WTC11 (cell line): ENCODE measurements at regions of chr9 and their contacts with region 1.

Region 1: DNA sequence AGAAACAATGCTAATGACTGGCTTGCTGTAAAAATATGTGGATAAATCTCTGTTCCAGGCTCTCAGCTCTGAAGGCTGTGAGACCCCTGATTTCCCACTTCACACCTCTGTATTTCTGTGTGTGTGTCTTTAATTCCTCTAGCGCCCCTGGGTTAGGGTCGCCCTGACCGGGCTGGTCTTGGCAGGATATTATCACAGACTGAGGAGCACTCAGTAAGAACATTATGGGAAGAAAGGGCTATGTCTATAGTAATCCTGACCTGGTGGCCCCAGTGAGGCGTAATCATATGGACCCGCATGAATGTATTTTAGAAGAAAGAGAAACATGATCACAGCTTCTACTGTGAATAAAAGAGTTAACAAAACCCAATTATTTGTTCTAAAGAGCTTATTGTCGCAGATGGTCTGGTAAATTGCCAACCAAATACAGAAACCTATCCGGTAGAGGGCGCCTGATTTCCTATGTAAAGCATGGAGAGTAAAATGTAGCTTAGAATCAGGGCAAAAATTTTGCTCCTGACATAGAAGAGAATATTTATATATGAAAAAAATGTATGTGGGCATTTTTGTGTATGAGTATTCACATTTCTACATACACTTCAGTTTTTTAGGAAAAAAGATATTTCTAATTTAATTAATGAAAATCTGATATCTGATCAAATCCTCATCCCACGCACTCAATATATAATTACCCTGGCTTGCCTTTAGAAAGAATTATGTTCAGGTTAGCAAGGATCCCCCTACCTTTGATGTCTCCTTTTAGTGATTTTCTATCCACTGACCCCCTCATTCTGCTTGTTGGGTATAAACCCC is 5.8 kb upstream of the IFNA1 start:
- DNase-seq: peak; percentile 32
- ATAC-seq: peak; percentile 64
- H3K4me3 Mint-ChIP-seq: no peak overlapping the region
- H3K27ac Mint-ChIP-seq: no peak overlapping the region
- H3K4me1 Mint-ChIP-seq: peaks cover 18% of the 10 kb centered on the region
- H3K27me3 Mint-ChIP-seq: no peaks in the 10 kb centered on the region
- CTCF ChIP-seq: peak; percentile 34; the same call in 1 of the 2 replicates

Region 2: DNA sequence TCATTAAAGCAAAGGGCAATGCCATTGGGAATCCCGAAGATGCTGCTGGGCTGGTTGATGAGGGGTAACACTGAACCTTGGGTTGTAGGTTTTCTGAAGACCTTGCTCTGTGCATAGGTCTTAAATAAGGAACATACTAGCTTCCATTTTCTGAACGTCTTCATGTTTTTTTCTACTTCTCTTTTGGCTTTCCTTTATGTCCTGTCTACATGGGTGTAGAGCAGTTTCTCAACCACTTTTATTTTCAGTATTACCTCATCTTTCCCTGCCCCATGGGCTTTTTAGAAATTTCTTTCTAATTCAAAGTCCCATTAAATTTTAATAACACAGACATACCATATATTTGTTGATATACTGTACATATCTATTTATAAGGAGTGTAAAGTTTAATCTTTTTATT is 194.5 kb before region 1 on chr9 and contains the start of gene IFNA14:
- CTCF ChIA-PET with region 1: interaction called, 10 read pairs
- POLR2A ChIA-PET with region 1: no interaction called
- DNase-seq: no peak
- ATAC-seq: no peak
- H3K4me3 Mint-ChIP-seq: no peak within 1 kb of the TSS
- H3K27ac Mint-ChIP-seq: no peak within 1 kb of the TSS
- H3K4me1 Mint-ChIP-seq: no peaks in the 10 kb centered on the region
- H3K27me3 Mint-ChIP-seq: peaks cover 5% of the 10 kb centered on the region
- CTCF ChIP-seq: no peak
- total RNA-seq, gene IFNA14: not detected in 3 replicates

Region 3: GRCh38 chr9:21326526-21327139 is 107.8 kb before region 1 on chr9:
- CTCF ChIA-PET with region 1: interaction called, 22 read pairs
- POLR2A ChIA-PET with region 1: no interaction called
- DNase-seq: no peak
- ATAC-seq: peak; percentile 74
- H3K4me3 Mint-ChIP-seq: no peak overlapping the region
- H3K27ac Mint-ChIP-seq: no peak overlapping the region
- H3K4me1 Mint-ChIP-seq: 0 out of 2 replicates have a peak, but pooled peaks cover 2% of the 10 kb centered on the region
- H3K27me3 Mint-ChIP-seq: no peaks in the 10 kb centered on the region
- CTCF ChIP-seq: peak; percentile 14; the same call in 1 of the 2 replicates

Region 4: DNA sequence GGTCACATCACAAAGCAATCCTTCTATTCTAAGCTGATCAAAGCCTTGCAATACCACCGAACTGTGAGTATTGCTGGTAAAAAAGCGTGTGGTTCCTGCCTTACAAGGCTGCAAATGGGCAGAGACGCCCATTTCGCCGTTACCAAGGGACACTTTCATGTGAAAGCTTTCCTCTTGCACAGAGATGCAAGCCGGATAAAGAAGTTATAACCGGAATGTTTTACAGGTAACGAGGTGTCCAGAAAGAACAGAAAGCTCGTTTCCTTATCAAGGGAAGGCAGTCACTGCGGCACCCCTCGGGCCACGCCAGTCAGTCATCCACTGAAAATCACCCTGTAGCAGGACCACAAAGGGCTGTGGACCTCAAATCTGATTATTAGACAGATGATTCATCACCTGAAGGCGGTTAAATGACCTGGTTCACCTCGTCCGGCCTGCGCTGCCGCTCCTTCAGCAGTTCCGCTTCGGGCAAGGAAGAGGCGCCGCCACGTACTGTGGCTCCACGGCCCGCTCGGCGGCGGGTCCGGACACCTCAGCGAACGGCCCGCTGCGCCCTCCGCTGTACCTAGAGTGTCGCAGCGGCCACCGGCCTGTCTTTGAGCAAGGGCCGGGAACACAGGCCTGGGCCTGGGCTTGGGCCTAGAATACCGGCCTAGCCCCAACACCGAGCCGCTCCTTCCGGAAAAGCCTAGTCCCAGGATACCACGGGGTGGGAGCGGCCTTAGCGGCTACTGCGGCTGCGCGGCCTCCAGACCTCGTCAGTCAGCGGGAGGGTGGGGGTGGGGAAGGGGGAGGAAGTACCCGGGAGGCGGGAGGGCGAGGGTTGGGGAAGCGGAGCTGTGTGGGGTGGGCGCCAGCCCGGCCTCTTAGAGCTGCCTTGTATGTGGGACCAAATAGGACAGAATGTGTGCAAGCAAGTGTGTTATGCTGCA is 99.4 kb before region 1 on chr9 and contains the start of gene KLHL9:
- CTCF ChIA-PET with region 1: interaction called, 11 read pairs
- POLR2A ChIA-PET with region 1: no interaction called
- DNase-seq: peak; percentile 91
- ATAC-seq: peak; percentile 94
- H3K4me3 Mint-ChIP-seq: peak within 1 kb of the TSS; percentile 93
- H3K27ac Mint-ChIP-seq: peak within 1 kb of the TSS; percentile 88
- H3K4me1 Mint-ChIP-seq: peaks cover 37% of the 10 kb centered on the region
- H3K27me3 Mint-ChIP-seq: peaks cover 18% of the 10 kb centered on the region
- CTCF ChIP-seq: no peak
- total RNA-seq, gene KLHL9: 15.6 to 17.4 TPM (median 16.1 TPM) in 3 replicates

Region 5: GRCh38 chr9:21455320-21455719 is 20.9 kb after region 1 on chr9:
- CTCF ChIA-PET with region 1: interaction called, 34 read pairs
- POLR2A ChIA-PET with region 1: no interaction called
- DNase-seq: peak; percentile 25
- ATAC-seq: peak; percentile 97
- H3K4me3 Mint-ChIP-seq: no peak overlapping the region
- H3K27ac Mint-ChIP-seq: no peak overlapping the region
- H3K4me1 Mint-ChIP-seq: peaks cover 12% of the 10 kb centered on the region
- H3K27me3 Mint-ChIP-seq: peaks cover 5% of the 10 kb centered on the region
- CTCF ChIP-seq: 0 out of 2 replicates have a peak, but pooled peaks have one; percentile 31